Caco-2 (cell line): ENCODE measurements at regions of chrX and their contacts with region 1.

Region 1: DNA sequence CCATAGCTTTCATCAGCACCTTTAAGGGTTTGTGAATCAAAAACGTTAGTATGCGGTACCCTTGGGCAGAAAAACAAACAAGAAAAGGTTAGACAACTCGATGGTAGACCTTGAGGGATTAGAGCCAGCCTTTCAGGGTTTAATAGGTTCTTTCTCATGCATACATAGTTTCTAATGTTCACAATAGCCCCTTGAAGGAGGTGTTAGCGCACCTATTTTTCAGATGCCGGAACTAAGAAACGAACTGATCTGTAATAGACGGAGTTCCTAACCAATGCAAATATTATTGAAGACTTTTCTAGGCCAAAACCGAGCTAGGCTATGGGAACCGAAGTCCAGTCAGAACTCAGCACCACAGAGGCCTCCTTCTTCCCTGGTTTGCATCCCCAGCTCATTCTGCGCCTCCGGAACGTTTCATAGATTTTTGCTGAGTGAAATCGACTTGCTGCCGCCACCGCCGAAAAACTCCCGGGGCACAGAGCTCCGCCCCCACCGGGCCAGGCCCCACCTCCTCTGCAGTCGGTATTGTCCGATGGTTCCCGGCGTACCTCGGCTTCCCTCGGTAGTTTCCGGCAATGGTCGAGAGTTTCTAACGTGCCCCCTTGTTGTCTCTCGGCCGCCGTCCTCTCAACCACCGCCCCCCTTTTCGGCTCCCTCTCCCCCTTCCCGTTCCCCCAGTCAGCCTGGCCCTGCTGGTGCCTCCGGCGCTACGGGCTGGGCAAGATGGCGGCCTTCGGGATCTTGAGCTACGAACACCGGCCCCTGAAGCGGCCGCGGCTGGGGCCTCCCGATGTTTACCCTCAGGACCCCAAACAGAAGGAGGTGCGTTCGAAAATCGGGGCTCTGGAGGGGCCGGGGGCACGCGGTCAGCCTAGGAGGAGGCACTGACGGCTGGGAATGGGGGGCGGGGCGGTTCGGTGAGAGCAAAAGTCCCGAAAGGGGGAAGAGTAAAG is at the start of gene MED12:
- DNase-seq: peak; percentile 75 to 79
- H3K4me3 ChIP-seq: peak within 1 kb of the TSS; percentile 71
- H3K4me3 Mint-ChIP-seq: peak within 1 kb of the TSS; percentile 75
- H3K27ac Mint-ChIP-seq: peak within 1 kb of the TSS; percentile 64
- H3K4me1 ChIP-seq: no peaks in the 10 kb centered on the region
- H3K4me1 Mint-ChIP-seq: no peaks in the 10 kb centered on the region
- H3K27me3 ChIP-seq: no peaks in the 10 kb centered on the region
- H3K27me3 Mint-ChIP-seq: no peaks in the 10 kb centered on the region
- CTCF ChIP-seq: no peak
- total RNA-seq, gene MED12: 44.1 and 55.4 TPM in 2 replicates

Region 2: DNA sequence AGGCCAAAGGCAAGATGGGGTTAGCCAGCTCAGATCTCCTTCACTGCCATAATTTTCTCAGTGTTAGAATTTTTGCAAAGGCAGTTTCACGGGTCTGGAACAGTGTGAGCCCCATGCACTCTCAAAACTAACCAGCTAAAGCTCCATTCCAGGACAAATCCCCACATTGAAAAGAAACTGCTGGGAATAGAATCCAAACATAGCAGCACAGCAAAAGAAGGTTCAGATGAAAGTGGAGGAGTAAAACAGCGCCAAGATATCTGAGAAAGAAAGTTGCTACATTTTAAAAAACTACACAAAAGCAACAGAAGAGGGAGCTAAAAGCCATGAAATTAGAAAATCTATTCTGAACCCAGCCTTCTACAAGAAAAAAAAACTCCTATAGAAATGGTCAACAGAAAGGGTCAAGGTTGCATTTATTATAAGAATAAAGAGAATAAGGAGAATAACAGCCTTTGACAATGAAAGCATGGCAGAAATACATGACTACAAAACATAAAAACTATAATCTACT is 147.8 kb before region 1 on chrX:
- CTCF ChIA-PET with region 1: no interaction called
- POLR2A ChIA-PET with region 1: no interaction called
- intact Hi-C with region 1: no loop called
- DNase-seq: no peak
- H3K4me3 ChIP-seq: no peak overlapping the region
- H3K4me3 Mint-ChIP-seq: no peak overlapping the region
- H3K27ac Mint-ChIP-seq: no peak overlapping the region
- H3K4me1 ChIP-seq: no peaks in the 10 kb centered on the region
- H3K4me1 Mint-ChIP-seq: no peaks in the 10 kb centered on the region
- H3K27me3 ChIP-seq: no peaks in the 10 kb centered on the region
- H3K27me3 Mint-ChIP-seq: peaks cover 3% of the 10 kb centered on the region
- CTCF ChIP-seq: peak in 1 of 2 experiments; percentile 24

Region 3: GRCh38 chrX:71068049-71068763 is 50.1 kb before region 1 on chrX and contains the start of gene SNX12:
- CTCF ChIA-PET with region 1: no interaction called
- POLR2A ChIA-PET with region 1: no interaction called
- intact Hi-C with region 1: loop called (anchors 1 kb)
- DNase-seq: peak; percentile 92 to 93
- H3K4me3 ChIP-seq: peak within 1 kb of the TSS; percentile 66
- H3K4me3 Mint-ChIP-seq: peak within 1 kb of the TSS; percentile 100
- H3K27ac Mint-ChIP-seq: peak within 1 kb of the TSS; percentile 94
- H3K4me1 ChIP-seq: 0 out of 2 replicates have a peak, but pooled peaks cover 5% of the 10 kb centered on the region
- H3K4me1 Mint-ChIP-seq: peaks cover 28% of the 10 kb centered on the region
- H3K27me3 ChIP-seq: no peaks in the 10 kb centered on the region
- H3K27me3 Mint-ChIP-seq: no peaks in the 10 kb centered on the region
- CTCF ChIP-seq: no peak
- total RNA-seq, gene SNX12: 88.0 and 89.0 TPM in 2 replicates

Region 4: DNA sequence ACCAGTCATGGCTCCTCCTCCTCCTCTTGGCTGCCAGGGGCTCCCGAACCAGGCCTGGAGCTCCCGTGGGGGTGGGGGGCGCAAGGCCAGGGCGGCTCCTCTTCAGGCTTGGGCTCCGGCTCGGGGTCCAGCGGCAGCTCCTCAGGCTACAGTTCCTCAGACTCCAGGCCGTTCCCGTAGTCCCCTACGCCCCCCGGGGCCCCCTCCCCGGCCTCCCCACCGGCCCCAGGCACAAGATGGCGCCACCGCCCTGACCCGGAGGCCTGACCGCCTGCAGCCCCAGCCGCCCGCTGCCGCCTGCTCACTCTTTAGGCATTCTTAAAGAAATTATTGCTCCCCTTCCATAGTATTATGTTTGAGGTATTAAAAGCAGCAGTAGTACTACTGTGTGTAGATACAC is 302.4 kb after region 1 on chrX:
- CTCF ChIA-PET with region 1: no interaction called
- POLR2A ChIA-PET with region 1: no interaction called
- intact Hi-C with region 1: no loop called
- DNase-seq: no peak
- H3K4me3 ChIP-seq: no peak overlapping the region
- H3K4me3 Mint-ChIP-seq: no peak overlapping the region
- H3K27ac Mint-ChIP-seq: no peak overlapping the region
- H3K4me1 ChIP-seq: no peaks in the 10 kb centered on the region
- H3K4me1 Mint-ChIP-seq: no peaks in the 10 kb centered on the region
- H3K27me3 ChIP-seq: no peaks in the 10 kb centered on the region
- H3K27me3 Mint-ChIP-seq: no peaks in the 10 kb centered on the region
- CTCF ChIP-seq: no peak